Astrocyte of the cerebellum (primary cell): ENCODE measurements at regions of chr1 and their contacts with region 1.

Region 1: DNA sequence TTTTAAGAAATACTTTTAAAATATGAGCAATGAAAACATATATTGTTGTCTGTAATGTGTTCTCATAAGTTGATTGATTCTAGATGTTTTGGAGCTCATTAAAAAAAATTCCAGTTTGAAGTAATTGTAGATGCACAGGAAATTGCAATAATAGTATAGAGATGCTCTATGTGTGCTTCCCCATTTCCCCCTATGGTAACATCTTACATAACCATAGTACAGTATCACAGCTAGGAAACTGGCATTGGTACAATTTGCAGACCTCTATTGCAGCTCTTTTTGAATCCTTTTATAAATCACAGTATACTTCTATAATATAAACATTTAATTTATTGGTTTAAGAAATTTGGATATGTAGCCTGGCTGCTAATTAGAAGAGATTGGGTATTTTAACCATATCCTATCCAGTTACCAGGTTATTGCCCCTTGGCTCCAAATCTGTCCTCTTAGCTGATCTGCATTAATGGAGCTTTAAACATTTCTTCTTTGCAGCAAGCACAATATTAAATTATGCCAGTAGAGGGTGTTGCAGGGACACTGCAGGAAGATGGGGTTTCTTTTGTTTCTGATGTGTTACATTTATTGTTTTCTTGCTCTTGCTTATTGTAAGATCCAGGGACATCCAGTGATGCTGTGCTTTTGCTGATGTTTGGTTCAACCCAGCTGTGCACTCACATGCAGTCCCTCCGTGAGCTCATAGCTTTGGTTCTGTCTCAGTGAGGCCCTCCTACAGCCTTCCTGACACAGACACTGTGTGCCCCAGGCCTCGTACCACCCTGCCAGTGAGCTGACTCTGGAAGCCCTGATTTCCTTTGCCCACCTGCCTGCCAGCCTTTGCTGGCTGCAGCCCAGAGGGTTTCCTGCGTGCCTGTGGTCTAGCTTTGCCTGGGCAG is 103.3 kb downstream of the RABGAP1L start:
- DNase-seq: peak; percentile 68
- H3K4me3 ChIP-seq: no peak overlapping the region
- CTCF ChIP-seq: peak; percentile 76

Region 2: DNA sequence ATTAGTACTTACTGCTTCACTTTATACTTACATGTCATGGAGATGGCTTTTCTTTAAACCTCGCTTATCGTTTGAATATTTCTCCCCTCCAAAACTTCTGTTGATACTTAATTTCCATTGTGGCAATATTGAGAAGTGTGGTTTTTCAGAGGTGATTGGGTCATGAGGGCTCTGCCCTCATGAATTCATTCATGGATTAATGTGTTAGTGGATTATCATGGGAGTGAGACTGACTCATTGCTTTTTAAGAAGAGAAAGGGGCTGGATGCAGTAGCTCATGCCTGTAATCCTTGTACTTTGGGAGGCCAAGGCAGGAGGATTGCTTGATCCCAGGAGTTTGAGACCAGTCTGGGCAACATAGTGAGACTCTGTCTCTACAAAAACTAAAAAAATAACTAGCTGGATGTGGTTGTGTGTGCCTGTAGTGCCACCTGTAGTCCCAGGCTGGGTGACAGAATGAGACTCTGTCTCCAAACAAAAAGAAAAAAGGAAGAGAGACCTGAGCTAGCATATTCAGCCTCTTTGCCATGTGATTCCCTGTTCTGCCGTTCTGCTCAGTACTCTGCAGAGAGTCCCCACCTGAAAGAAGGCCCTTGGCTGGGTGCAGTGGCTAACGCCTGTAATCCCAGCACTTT is 73.0 kb before region 1 on chr1:
- in situ Hi-C with region 1: no loop called
- DNase-seq: no peak
- H3K4me3 ChIP-seq: no peak overlapping the region
- CTCF ChIP-seq: no peak

Region 3: GRCh38 chr1:174204697-174205308 is 57.8 kb before region 1 on chr1:
- in situ Hi-C with region 1: no loop called
- DNase-seq: no peak
- H3K4me3 ChIP-seq: no peak overlapping the region
- CTCF ChIP-seq: no peak

Region 4: GRCh38 chr1:174358786-174359453 is 96.3 kb after region 1 on chr1:
- in situ Hi-C with region 1: no loop called
- DNase-seq: no peak
- H3K4me3 ChIP-seq: no peak overlapping the region
- CTCF ChIP-seq: no peak

Region 5: GRCh38 chr1:174736831-174737230 is 474.2 kb after region 1 on chr1:
- in situ Hi-C with region 1: loop called (anchors 5 kb)
- DNase-seq: no peak
- H3K4me3 ChIP-seq: no peak overlapping the region
- CTCF ChIP-seq: no peak